ENCODE measurements at regions of chrX and their contacts with region 1.

Region 1: DNA sequence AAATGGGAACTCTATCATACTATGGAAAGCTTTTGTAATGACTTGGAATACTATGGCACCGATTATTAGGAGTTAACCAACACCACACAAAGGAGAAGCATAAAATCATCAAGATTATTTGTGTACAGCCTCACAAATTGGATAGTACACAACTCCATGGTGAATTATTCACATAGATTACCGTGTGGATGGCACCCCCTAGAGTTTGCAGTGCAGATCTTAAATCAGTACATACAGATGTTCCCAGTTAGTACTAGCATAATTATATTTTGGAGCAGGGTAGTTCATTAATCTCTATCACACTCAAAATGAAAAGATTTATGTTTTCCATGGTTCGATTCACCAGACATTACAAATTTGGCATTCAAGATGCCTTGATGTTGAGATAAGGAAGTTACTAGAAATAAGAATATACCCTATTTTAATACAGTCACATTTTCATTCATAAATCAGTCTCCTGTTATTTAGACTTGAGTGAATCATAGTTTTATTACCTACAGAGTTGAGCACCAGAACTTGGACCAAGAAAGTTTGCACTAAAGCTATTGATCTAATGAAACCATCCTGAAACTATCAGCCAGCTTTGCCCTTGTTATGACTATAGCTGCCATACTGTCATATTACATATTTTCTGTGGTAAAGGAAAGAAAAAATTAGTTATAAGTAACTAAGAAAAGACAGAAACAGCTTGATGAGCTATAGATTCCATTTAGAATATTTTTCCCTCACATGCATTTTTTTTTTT is 531.8 kb downstream of the GLUD2 start:
- DNase-seq: peak; percentile 15
- ATAC-seq: peak; percentile 63
- H3K4me3 ChIP-seq: no peak overlapping the region
- H3K27ac ChIP-seq: no peak overlapping the region
- H3K4me1 ChIP-seq: no peaks in the 10 kb centered on the region
- H3K27me3 ChIP-seq: no peaks in the 10 kb centered on the region
- CTCF ChIP-seq: peak; percentile 32 to 58 (median 39); a peak in 5 of 6 replicates
- POLR2A ChIP-seq: no peak
- RAD21 ChIP-seq: peak; percentile 58

Region 2: DNA sequence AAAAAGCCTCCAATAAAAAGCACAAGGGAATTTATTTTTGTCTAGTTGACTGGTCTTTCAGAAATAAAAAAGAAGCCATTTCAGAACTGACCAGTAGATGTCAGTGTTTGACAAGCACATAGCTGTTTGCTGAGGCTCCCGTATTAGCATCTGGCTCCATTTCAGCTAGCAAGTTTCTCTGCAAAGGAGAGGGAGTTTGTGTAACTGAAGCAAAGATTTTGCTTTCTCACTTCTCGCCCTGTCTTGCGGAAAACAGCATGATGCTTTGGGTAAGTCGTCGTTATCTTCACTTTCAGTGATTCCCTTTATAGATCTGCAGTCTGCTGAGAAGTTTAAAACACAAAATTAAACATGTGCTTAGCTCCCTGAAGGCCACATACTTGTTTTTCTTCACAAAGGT is 789.1 kb before region 1 on chrX:
- CTCF ChIA-PET with region 1: no interaction called
- POLR2A ChIA-PET with region 1: no interaction called
- RAD21 ChIA-PET with region 1: no interaction called
- intact Hi-C with region 1: loop called (anchors 2 kb)
- DNase-seq: peak; percentile 38
- ATAC-seq: peak; percentile 50; the same call in 1 of the 2 replicates
- H3K4me3 ChIP-seq: no peak overlapping the region
- H3K27ac ChIP-seq: no peak overlapping the region
- H3K4me1 ChIP-seq: peaks cover 0 to 5% of the 10 kb centered on the region in 2 experiments; a peak in 2 of 4 replicates
- H3K27me3 ChIP-seq: no peaks in the 10 kb centered on the region
- CTCF ChIP-seq: peak; percentile 48 to 59 (median 57); a peak in 5 of 6 replicates
- POLR2A ChIP-seq: no peak
- RAD21 ChIP-seq: peak; percentile 81

Region 3: DNA sequence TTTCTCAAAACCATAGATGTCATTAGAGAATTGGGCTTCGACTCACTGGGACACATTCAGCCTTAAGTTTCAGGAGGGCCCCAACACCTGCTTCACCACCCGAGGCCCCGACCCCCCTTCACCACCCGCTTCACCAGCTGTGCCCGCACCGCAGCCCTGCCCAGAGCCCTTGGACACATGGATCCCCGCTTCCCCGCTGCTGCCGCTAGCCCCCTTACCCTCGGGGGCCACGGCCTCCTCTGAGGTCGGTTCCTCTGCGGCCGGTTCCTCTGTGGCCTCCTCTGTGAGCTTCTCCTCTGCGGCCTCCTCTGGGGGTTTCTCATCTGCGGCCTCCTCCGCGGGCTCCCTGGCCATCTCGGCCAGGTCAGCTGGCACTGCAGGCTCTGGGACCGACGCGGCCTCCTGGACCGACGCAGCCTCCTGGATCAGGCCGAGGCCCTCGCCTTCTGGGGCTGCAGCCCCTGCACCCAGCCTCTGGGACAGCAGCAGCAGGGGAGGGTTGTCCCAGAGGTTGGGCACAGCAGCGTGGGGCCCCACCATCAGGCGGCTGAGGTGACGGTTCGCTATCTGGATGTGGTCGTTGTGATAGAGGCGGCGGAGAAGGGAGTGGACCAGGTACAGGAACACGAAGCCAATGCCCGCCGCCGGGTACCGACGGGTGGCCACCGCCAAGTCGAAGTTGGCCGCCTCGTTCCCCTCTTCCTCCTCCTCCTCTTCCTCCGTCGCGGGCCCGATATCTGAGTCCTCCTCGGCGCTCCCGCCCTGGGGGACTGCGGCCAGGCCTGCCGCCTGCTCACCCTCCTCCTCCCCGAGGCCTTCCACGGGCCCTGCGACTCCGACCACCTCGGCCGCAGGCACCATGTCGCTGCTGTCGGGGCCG is 704.3 kb before region 1 on chrX:
- CTCF ChIA-PET with region 1: no interaction called
- POLR2A ChIA-PET with region 1: no interaction called
- RAD21 ChIA-PET with region 1: no interaction called
- intact Hi-C with region 1: no loop called
- DNase-seq: no peak
- ATAC-seq: no peak
- H3K4me3 ChIP-seq: no peak overlapping the region
- H3K27ac ChIP-seq: no peak overlapping the region
- H3K4me1 ChIP-seq: no peaks in the 10 kb centered on the region
- H3K27me3 ChIP-seq: no peaks in the 10 kb centered on the region
- CTCF ChIP-seq: no peak
- POLR2A ChIP-seq: no peak
- RAD21 ChIP-seq: no peak

Region 4: GRCh38 chrX:121308276-121308805 is 270.8 kb before region 1 on chrX:
- CTCF ChIA-PET with region 1: no interaction called
- POLR2A ChIA-PET with region 1: no interaction called
- RAD21 ChIA-PET with region 1: no interaction called
- intact Hi-C with region 1: loop called (anchors 1 kb)
- DNase-seq: peak; percentile 10
- ATAC-seq: peak; percentile 83
- H3K4me3 ChIP-seq: no peak overlapping the region
- H3K27ac ChIP-seq: no peak overlapping the region
- H3K4me1 ChIP-seq: no peaks in the 10 kb centered on the region
- H3K27me3 ChIP-seq: no peaks in the 10 kb centered on the region
- CTCF ChIP-seq: peak; percentile 21 to 51 (median 49); a peak in 5 of 6 replicates
- POLR2A ChIP-seq: no peak
- RAD21 ChIP-seq: peak; percentile 63

Region 5: GRCh38 chrX:121322159-121322558 is 257.0 kb before region 1 on chrX:
- CTCF ChIA-PET with region 1: interaction called, 3 read pairs
- POLR2A ChIA-PET with region 1: no interaction called
- RAD21 ChIA-PET with region 1: no interaction called
- intact Hi-C with region 1: loop called (anchors 5 kb)
- DNase-seq: no peak
- ATAC-seq: no peak
- H3K4me3 ChIP-seq: no peak overlapping the region
- H3K27ac ChIP-seq: no peak overlapping the region
- H3K4me1 ChIP-seq: no peaks in the 10 kb centered on the region
- H3K27me3 ChIP-seq: no peaks in the 10 kb centered on the region
- CTCF ChIP-seq: peak; percentile 14 to 38 (median 18); a peak in 2 of 6 replicates
- POLR2A ChIP-seq: no peak
- RAD21 ChIP-seq: peak; percentile 18; the same call in 1 of the 2 replicates